Activated B cell treated with CpG ODN at 0.5 μM for 24 hours (primary cell): ENCODE measurements at regions of chr9 and their contacts with region 1.

Region 1: GRCh38 chr9:129884220-129885017 is 49.2 kb downstream of the USP20 start:
- DNase-seq: peak; percentile 92
- ATAC-seq: peak; percentile 61
- H3K4me3 Mint-ChIP-seq: peak overlapping the region; percentile 84
- H3K27ac Mint-ChIP-seq: peak overlapping the region; percentile 98
- H3K4me1 Mint-ChIP-seq: peaks cover 59% of the 10 kb centered on the region
- H3K27me3 Mint-ChIP-seq: no peaks in the 10 kb centered on the region
- CTCF ChIP-seq: no peak

Region 2: GRCh38 chr9:129811967-129812363 is 72.5 kb before region 1 on chr9:
- CTCF ChIA-PET with region 1: no interaction called
- POLR2A ChIA-PET with region 1: no interaction called
- intact Hi-C with region 1: no loop called
- DNase-seq: no peak
- ATAC-seq: peak; percentile 61
- H3K4me3 Mint-ChIP-seq: no peak overlapping the region
- H3K27ac Mint-ChIP-seq: peak overlapping the region; percentile 10
- H3K4me1 Mint-ChIP-seq: peaks cover 8% of the 10 kb centered on the region
- H3K27me3 Mint-ChIP-seq: no peaks in the 10 kb centered on the region
- CTCF ChIP-seq: no peak

Region 3: DNA sequence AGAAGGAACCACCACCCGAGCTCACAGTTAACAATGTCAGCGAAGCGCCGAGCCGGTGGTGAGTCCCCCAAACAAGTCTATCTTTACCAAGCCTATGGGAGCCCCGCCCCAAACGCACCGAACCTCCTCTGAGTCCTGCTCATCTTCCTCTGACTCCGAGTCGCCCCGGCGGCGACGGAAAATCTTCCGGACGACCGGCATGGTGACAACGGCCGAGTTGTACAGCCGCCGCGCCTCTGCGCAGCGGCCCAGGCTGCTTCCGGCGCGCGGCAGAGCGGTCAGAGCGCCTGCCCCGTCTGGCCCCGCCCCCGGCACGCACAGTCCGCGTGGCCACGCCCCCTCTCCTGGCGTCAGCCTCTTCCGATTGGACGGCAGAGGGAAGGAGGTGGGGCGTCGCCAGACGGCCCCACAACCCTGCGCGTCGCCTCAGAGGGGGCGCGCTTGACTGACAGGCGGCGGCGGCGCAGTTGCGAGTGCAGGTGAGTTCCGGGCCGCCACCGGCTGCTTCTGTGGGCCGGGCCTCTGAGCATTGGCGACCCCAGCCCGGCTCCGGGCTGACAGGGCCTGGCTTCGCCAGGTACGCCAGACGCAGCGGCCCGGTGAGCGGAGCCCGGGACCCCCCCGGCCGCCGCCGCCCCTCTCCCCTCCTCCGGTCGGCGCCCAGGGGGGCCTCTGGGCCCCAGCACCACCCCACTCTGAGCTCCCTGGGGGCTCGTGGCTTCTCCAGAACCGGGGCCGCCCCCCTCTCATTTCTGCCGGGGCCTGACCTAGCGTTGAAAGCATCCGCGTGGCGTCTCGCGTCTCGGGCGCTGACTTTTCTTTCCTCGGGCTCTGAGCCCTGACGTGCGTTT is 49.2 kb before region 1 on chr9 and contains the starts of genes C9orf78 and USP20:
- CTCF ChIA-PET with region 1: interaction called, 13 read pairs
- POLR2A ChIA-PET with region 1: interaction called, 28 read pairs
- intact Hi-C with region 1: loop called (anchors 1 kb)
- DNase-seq: peak; percentile 97
- ATAC-seq: peak; percentile 96
- H3K4me3 Mint-ChIP-seq: peak within 1 kb of the TSS; percentile 99
- H3K27ac Mint-ChIP-seq: peak within 1 kb of the TSS; percentile 98
- H3K4me1 Mint-ChIP-seq: peaks cover 46% of the 10 kb centered on the region
- H3K27me3 Mint-ChIP-seq: no peaks in the 10 kb centered on the region
- CTCF ChIP-seq: no peak
- total RNA-seq, gene C9orf78: 34.1 and 42.7 TPM in 2 replicates
- total RNA-seq, gene USP20: 28.1 and 31.6 TPM in 2 replicates

Region 4: GRCh38 chr9:129932303-129933151 is 48.1 kb after region 1 on chr9:
- CTCF ChIA-PET with region 1: interaction called, 3 read pairs
- POLR2A ChIA-PET with region 1: interaction called, 11 read pairs
- intact Hi-C with region 1: loop called (anchors 5 kb)
- DNase-seq: no peak
- ATAC-seq: peak; percentile 14
- H3K4me3 Mint-ChIP-seq: peak overlapping the region; percentile 41
- H3K27ac Mint-ChIP-seq: peak overlapping the region; percentile 59
- H3K4me1 Mint-ChIP-seq: peaks cover 41% of the 10 kb centered on the region
- H3K27me3 Mint-ChIP-seq: no peaks in the 10 kb centered on the region
- CTCF ChIP-seq: no peak

Region 5: GRCh38 chr9:130023144-130023787 is 138.8 kb after region 1 on chr9:
- CTCF ChIA-PET with region 1: no interaction called
- POLR2A ChIA-PET with region 1: interaction called, 20 read pairs
- intact Hi-C with region 1: loop called (anchors 1 kb)
- DNase-seq: no peak
- ATAC-seq: peak; percentile 78
- H3K4me3 Mint-ChIP-seq: peak overlapping the region; percentile 85
- H3K27ac Mint-ChIP-seq: peak overlapping the region; percentile 98
- H3K4me1 Mint-ChIP-seq: peaks cover 98% of the 10 kb centered on the region
- H3K27me3 Mint-ChIP-seq: no peaks in the 10 kb centered on the region
- CTCF ChIP-seq: no peak

Region 6: GRCh38 chr9:130100681-130101080 is 216.3 kb after region 1 on chr9:
- CTCF ChIA-PET with region 1: interaction called, 11 read pairs
- POLR2A ChIA-PET with region 1: interaction called, 5 read pairs
- intact Hi-C with region 1: loop called (anchors 1 kb)
- DNase-seq: no peak
- ATAC-seq: no peak
- H3K4me3 Mint-ChIP-seq: no peak overlapping the region
- H3K27ac Mint-ChIP-seq: no peak overlapping the region
- H3K4me1 Mint-ChIP-seq: peaks cover 11% of the 10 kb centered on the region
- H3K27me3 Mint-ChIP-seq: no peaks in the 10 kb centered on the region
- CTCF ChIP-seq: no peak

Region 7: GRCh38 chr9:130352081-130352480 is 467.7 kb after region 1 on chr9:
- CTCF ChIA-PET with region 1: no interaction called
- POLR2A ChIA-PET with region 1: interaction called, 3 read pairs
- intact Hi-C with region 1: loop called (anchors 10 kb)
- DNase-seq: no peak
- ATAC-seq: peak; percentile 89
- H3K4me3 Mint-ChIP-seq: no peak overlapping the region
- H3K27ac Mint-ChIP-seq: peak overlapping the region; percentile 70
- H3K4me1 Mint-ChIP-seq: peaks cover 20% of the 10 kb centered on the region
- H3K27me3 Mint-ChIP-seq: no peaks in the 10 kb centered on the region
- CTCF ChIP-seq: no peak